Mucosa of descending colon (tissue), 3 donors: ENCODE measurements at regions of chr6 and their contacts with region 1.

Region 1: GRCh38 chr6:35146453-35146852 is 5.3 kb upstream of the TCP11 start:
- DNase-seq: peak in 2 of 3 donors; percentile 72
- ATAC-seq: peak; percentile 80
- H3K4me3 ChIP-seq: no peak overlapping the region
- H3K4me1 ChIP-seq: peaks cover 1% of the 10 kb centered on the region
- CTCF ChIP-seq: peak; percentile 17

Region 2: DNA sequence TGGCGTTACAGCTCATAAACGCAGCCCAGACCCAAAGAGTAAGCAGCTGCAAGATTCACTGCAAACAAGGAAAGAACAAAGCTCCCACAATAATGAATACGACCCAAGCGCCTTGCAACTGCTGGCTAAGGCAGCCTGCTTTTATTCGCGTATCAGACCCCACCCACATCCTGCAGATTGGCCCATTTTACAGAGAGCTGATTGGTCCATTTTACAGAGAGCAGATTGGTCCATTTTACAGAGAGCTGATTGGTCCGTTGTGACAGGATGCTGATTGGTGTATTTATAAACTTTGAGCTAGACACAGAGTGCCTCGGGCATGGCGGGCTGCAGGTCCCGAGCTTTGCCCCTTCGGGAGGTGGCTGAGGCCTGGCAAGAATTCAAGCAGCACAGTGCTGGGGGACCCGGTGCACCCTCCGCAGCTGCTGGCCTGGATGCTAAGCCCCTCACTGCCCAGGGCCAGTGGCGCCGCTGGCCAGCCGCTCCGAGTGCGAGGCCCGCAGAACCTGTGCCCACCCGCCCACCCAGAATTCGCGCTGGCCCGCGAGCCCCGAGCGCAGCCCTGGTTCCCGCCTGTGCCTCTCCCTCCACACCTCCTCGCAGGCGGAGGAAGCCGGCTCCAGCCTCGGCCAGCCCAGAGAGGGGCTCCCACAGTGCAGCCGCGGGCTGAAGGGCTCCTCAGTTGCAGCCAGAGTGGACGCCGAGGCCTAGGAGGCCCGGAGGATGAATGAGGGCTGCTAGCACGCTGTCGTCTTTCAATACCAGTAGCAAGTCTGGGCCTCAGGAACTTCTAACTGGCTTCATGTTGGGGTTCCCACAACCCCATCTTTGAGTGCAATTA is 709.4 kb before region 1 on chr6:
- intact Hi-C with region 1: no loop called
- DNase-seq: no peak
- ATAC-seq: no peak
- H3K4me3 ChIP-seq: no peak overlapping the region
- H3K4me1 ChIP-seq: no peaks in the 10 kb centered on the region
- CTCF ChIP-seq: no peak

Region 3: GRCh38 chr6:34912715-34913464 is 233.6 kb before region 1 on chr6:
- intact Hi-C with region 1: no loop called
- DNase-seq: no peak
- ATAC-seq: peak; percentile 45
- H3K4me3 ChIP-seq: no peak overlapping the region
- H3K4me1 ChIP-seq: peaks cover 3% of the 10 kb centered on the region
- CTCF ChIP-seq: no peak

Region 4: DNA sequence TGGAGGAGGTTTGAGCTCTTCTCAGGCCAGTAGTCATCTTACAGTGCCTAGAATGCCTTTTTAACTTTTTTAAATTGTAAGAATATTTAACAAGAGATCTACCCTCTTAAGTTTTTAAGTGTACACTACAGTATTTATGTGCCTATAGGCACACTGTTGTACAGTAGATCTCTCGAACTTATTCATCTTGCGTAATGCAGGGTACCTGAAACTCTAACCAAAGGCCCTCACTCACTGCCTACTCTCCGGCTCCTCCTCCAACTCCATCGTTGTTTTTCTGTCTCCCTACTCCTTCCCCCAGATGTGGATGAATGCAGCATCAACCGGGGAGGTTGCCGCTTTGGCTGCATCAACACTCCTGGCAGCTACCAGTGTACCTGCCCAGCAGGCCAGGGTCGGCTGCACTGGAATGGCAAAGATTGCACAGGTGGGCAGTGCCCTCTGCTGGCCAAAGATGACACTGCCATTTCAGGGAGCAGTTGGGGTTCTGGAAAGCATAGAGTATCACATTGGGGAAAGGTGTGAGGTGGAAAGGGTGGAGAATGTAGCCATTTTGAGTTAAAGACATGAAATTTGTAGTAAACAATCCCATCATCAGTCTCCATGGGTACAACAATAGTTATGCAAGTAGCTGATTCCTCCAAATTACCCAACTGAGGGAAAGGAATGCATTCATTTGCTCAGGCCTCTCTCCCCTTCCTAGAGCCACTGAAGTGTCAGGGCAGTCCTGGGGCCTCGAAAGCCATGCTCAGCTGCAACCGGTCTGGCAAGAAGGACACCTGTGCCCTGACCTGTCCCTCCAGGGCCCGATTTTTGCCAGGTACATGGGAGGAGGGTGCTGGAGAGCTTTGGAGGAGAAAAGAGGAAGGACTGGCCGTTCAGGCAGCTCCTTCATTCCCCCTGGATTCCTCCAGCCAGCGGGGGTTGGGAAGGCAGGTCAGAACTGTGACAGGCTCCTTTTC is 94.7 kb after region 1 on chr6:
- intact Hi-C with region 1: loop called in 1 of 2 experiments (anchors 5 kb)
- DNase-seq: peak; percentile 66 to 87 (median 84)
- ATAC-seq: peak; percentile 93
- H3K4me3 ChIP-seq: no peak overlapping the region
- H3K4me1 ChIP-seq: no peaks in the 10 kb centered on the region
- CTCF ChIP-seq: peak; percentile 87